Activated CD4-positive, alpha-beta T cell treated with anti-CD3 and anti-CD28 coated beads for 36 hours (primary cell): ENCODE measurements at regions of chr5 and their contacts with region 1.

Region 1: DNA sequence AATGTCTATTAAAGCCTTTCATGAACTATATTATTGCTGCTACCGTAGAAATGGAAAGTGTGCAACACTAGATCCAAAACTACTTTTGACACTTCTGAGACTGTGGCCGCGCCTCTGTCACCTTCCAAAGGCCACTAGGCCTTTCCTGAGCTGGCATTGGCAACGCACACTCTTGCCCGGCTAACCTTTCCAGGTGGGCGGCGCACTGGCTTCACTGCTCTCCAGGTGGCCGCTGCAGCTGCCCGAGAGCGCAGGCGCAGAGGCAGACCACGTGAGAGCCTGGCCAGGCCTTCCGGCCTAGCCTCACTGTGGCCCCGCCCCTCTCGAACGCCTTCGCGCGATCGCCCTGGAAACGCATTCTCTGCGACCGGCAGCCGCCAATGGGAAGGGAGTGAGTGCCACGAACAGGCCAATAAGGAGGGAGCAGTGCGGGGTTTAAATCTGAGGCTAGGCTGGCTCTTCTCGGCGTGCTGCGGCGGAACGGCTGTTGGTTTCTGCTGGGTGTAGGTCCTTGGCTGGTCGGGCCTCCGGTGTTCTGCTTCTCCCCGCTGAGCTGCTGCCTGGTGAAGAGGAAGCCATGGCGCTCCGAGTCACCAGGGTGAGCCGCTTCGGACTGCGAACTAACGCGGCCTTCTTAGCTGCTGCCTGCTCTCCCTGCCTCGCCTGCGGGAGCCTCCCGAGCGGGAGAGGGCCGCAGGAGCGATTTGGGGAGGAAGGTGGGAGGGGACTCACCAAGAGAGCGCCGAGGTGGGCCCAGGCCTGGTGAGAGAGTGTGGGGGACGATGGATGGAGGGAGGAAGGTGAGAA is at the start of gene CCNB1:
- DNase-seq: peak; percentile 99
- ATAC-seq: peak; percentile 100
- H3K4me3 Mint-ChIP-seq: peak within 1 kb of the TSS; percentile 94
- H3K27ac Mint-ChIP-seq: peak within 1 kb of the TSS; percentile 81
- H3K4me1 Mint-ChIP-seq: peaks cover 17% of the 10 kb centered on the region
- H3K27me3 Mint-ChIP-seq: no peaks in the 10 kb centered on the region
- total RNA-seq, gene CCNB1: 163 to 205 TPM

Region 2: DNA sequence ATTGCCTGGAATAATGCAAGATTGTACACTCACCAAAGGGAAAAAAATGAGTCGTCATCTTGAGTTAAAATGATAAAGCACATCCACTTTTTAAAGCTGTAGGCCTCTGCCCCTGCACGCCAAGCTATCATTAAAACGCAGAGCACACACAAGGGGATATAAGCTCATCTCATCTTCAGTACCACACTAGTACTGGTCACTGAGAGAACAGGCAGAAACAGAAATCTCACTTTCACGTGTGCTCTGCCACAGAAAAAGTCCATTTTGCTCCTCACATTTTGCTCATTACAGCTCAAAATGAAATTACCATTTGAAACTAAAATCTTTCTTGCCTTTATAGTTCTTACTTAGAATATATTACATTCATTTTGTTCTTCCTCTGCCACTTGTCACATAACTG is 172.2 kb before region 1 on chr5:
- CTCF ChIA-PET with region 1: no interaction called
- POLR2A ChIA-PET with region 1: no interaction called
- intact Hi-C with region 1: no loop called
- DNase-seq: no peak
- ATAC-seq: no peak
- H3K4me3 Mint-ChIP-seq: no peak overlapping the region
- H3K27ac Mint-ChIP-seq: no peak overlapping the region
- H3K4me1 Mint-ChIP-seq: peaks cover 7% of the 10 kb centered on the region
- H3K27me3 Mint-ChIP-seq: peaks cover 3% of the 10 kb centered on the region

Region 3: DNA sequence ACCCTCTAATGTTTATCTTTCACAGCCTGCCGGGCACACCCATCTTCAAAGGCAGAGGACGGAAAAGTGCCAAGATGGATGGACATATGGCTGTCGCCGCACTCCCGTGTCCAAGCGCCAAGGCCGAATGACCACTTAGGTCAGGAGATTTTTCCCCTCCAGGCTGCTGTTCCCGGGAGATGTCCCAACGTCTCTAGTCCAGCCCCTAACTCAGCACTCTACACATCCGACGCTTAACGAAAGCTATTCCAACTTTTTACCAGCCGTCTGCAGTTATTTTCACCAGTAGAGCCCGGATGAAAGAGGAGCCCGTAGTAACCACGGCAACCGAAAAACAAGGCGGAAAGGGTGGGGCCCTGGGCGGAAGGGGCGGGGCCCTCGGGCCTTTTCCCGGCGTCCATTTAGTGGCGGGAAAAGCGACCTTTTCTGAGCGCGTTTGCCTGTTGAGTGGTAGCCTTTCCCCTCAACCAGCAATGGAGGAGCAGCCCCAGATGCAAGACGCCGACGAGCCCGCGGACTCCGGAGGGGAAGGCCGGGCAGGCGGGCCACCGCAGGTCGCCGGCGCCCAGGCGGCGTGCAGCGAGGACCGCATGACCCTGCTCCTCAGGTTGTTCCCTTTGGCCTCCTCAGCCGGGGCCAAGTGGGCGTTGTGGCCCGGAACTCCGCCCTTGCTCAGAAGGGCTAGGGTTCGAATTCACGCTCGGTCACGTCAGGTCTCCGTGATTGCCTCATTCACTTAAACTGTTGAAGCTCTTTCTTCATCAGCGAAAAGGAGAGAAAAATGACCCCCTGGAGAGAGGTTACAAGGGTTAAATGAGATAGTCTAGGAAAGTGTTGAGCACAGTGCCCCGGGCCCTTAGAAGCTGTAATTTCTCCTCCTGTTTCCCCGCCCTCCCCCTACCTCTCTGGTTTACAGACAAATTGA is 22.5 kb after region 1 on chr5 and contains the start of gene CENPH:
- CTCF ChIA-PET with region 1: interaction called, 7 read pairs
- POLR2A ChIA-PET with region 1: interaction called, 6 read pairs
- intact Hi-C with region 1: loop called (anchors 1 kb)
- DNase-seq: peak; percentile 95
- ATAC-seq: peak; percentile 90
- H3K4me3 Mint-ChIP-seq: peak within 1 kb of the TSS; percentile 96
- H3K27ac Mint-ChIP-seq: peak within 1 kb of the TSS; percentile 99
- H3K4me1 Mint-ChIP-seq: peaks cover 8% of the 10 kb centered on the region
- H3K27me3 Mint-ChIP-seq: no peaks in the 10 kb centered on the region
- total RNA-seq, gene CENPH: 96.0 to 98.3 TPM

Region 4: DNA sequence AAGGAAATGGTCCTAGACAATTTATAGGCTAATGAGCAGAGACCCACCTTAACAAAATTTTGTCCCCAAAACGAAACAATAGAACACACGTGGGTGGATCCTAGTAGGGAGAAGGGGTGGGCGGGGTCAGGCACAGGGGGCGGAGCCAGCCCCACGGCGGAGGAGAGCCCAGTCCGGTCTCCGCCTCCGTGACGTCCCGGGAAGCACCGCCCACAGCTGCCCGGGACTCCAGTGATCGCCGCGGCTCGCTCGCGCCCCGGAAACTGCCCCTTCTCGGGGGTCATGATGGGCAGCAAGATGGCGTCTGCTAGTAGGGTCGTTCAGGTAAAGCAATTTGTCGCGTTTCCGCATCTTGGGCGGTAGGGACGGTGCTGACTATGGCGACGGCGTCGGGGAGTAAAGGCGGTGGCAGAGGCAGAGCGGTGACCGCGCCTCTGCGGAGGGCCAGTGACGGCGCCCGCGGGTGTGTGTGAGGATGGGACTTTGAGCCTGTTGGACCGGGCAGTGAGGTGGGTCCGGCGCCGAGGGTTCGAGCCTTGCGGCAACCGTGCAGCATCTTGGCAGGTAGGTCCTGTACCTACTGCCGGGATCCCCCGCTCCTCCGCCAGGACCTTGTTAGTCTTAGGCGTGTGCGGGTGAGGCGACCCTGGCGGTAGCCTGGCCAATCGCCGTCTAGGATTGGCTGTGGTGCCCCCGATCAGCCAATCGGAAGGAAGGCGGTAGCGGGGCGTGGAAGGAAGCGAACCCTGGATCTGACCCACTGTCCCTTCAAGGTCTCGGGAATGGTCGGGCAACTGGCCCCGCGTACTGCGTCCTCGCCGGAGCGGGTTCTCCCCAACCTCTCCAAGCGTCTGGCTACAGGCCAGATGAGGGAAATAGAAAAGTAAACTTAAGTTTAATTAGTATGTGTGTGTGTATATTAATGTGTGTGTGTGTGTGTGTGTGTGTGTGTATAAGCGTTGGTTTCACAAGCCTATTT is 50.9 kb after region 1 on chr5:
- CTCF ChIA-PET with region 1: no interaction called
- POLR2A ChIA-PET with region 1: interaction called, 9 read pairs
- intact Hi-C with region 1: loop called in 1 of 2 experiments (anchors 1 kb)
- DNase-seq: peak; percentile 97
- ATAC-seq: peak; percentile 93
- H3K4me3 Mint-ChIP-seq: peak overlapping the region; percentile 91
- H3K27ac Mint-ChIP-seq: peak overlapping the region; percentile 95
- H3K4me1 Mint-ChIP-seq: peaks cover 18% of the 10 kb centered on the region
- H3K27me3 Mint-ChIP-seq: no peaks in the 10 kb centered on the region

Region 5: DNA sequence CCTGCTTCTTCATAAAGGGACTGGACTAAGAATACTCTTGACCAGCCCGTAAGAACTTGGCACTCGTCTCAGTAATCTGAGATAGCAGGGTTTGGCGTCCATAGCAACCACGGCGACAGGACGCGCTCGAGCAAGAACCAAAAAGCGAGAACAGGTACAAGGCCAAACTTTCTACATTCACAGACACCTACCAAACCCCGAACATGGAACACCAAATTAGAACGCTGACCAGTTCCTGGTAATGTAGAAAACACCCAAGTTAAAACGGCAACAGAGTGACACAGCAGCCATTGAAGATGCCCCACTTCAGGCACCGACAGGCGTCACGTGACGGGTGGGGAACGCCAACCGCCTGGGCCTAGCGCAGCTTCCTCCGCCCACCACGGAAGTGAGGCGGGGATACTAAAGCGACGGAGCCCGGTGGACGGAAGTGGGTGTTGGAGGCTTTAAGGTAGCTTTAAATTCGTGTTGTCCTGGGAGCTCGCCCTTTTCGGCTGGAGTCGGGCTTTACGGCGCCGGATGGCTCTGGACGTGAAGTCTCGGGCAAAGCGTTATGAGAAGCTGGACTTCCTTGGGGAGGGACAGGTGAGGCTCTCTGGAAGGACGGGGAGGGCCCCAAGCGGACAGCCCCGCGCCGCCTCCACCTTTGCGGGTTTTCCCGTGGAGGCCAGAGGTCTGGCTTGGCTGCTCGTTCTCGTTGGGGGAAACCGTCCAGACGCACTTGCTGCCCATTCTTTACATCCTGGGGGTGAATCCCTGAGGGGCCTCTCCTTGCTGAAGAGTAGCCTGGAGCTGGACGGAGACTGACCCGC is 67.8 kb after region 1 on chr5 and contains the start of gene CDK7:
- CTCF ChIA-PET with region 1: no interaction called
- POLR2A ChIA-PET with region 1: no interaction called
- intact Hi-C with region 1: loop called (anchors 1 kb)
- DNase-seq: peak; percentile 96
- ATAC-seq: peak; percentile 100
- H3K4me3 Mint-ChIP-seq: peak within 1 kb of the TSS; percentile 80
- H3K27ac Mint-ChIP-seq: peak within 1 kb of the TSS; percentile 88
- H3K4me1 Mint-ChIP-seq: peaks cover 35% of the 10 kb centered on the region
- H3K27me3 Mint-ChIP-seq: no peaks in the 10 kb centered on the region
- total RNA-seq, gene CDK7: 47.0 to 47.8 TPM